Esophagus muscularis mucosa (tissue), 4 donors: ENCODE measurements at regions of chr20 and their contacts with region 1.

Region 1: DNA sequence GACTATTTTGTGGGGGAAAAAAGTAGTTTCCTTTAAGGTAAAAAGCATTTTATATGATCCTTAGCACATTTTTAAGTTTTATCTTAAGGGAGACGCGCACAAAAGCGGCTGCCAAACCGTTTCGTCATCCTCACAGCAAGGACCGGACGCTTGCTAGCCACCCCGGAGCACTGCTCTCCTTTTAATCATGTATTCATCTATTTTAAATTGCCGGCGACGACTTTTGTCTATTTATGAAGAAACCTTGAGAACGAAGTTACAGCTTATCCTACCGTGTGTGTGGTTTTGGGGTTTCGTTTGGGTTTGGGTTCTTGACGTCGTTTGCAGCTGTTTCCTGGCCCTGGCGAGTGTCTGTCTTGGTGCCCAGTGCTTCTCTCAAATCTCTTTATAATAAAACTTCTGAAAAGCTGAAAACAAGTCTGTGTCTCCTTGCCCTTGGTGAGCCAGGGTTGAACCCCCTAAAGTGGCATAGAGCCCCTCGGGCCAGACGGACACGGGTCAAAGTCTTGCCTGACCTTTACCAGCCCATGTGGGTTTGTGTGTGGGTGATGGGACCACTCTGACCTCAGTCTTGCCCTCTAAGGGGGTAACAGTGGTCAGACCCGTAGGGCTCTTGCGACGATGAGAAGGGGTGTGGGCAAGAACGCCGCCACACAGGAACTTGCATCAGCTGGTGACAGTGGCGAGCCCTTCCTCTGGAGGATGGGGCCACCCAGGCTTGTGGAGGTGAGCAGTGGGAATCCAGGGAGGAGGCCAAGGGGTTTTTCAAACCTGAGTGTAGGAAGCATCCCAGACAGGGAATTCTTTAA is 117.6 kb downstream of the JPH2 start:
- DNase-seq: peak; percentile 89
- H3K4me3 ChIP-seq: no peak overlapping the region
- H3K27ac ChIP-seq: no peak overlapping the region
- H3K4me1 ChIP-seq: peaks cover 0 to 4% (median 0%) of the 10 kb centered on the region in 4 donors
- H3K27me3 ChIP-seq: peaks cover 0 to 4% (median 0%) of the 10 kb centered on the region in 4 donors
- CTCF ChIP-seq: no peak
- EP300 ChIP-seq: no peak
- POLR2A ChIP-seq: no peak

Region 2: DNA sequence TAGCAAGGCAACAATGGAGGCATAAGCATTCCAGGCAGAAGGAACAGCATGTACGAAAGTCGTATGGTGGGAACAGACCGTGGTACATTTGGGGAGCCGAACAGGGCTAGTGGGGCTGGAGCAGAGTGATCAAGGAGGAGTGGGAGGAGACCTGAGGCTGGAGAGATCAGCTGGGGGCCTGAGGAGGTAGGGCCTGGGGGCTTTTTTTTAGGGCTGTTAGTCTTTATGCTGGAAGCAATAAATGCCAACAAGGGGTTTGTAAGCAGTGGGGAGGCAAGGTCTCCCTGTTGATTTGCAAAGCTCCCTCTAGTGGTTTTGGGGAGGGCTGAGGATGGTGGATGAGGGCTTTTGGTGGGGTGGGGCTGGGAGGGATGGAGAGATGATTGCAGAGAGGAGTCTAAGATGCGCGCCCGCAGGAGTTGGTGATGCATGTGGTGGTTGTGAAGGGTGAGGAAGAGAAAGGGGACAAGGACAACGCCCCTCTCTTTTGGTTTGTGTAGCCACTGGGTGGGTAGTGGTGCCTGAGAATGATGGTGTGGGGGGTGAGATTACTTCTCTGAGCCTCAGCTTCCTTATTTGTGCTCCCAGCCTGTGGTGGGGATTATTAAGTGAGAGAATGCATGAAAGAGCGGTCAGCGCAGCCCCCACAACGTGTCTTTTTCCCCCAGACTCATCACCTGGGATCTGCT is 228.9 kb before region 1 on chr20:
- intact Hi-C with region 1: loop called (anchors 10 kb)
- DNase-seq: no peak
- H3K4me3 ChIP-seq: no peak overlapping the region
- H3K27ac ChIP-seq: no peak overlapping the region
- H3K4me1 ChIP-seq: peaks cover 0 to 13% (median 12%) of the 10 kb centered on the region in 4 donors
- H3K27me3 ChIP-seq: no peaks in the 10 kb centered on the region
- CTCF ChIP-seq: peak in 2 of 3 experiments; percentile 15 to 48
- EP300 ChIP-seq: no peak
- POLR2A ChIP-seq: no peak

Region 3: GRCh38 chr20:44176833-44177534 is 107.6 kb after region 1 on chr20:
- intact Hi-C with region 1: no loop called
- DNase-seq: no peak
- H3K4me3 ChIP-seq: peak overlapping the region in 3 of 4 donors; percentile 1 to 30 (median 28)
- H3K27ac ChIP-seq: peak overlapping the region; percentile 90 to 98 (median 96)
- H3K4me1 ChIP-seq: peaks cover 58 to 96% (median 94%) of the 10 kb centered on the region in 4 donors
- H3K27me3 ChIP-seq: no peaks in the 10 kb centered on the region
- CTCF ChIP-seq: no peak
- EP300 ChIP-seq: peak; percentile 31
- POLR2A ChIP-seq: no peak